Stomach (tissue), 19 donors: ENCODE measurements at regions of chr17 and their contacts with region 1.

Region 1: DNA sequence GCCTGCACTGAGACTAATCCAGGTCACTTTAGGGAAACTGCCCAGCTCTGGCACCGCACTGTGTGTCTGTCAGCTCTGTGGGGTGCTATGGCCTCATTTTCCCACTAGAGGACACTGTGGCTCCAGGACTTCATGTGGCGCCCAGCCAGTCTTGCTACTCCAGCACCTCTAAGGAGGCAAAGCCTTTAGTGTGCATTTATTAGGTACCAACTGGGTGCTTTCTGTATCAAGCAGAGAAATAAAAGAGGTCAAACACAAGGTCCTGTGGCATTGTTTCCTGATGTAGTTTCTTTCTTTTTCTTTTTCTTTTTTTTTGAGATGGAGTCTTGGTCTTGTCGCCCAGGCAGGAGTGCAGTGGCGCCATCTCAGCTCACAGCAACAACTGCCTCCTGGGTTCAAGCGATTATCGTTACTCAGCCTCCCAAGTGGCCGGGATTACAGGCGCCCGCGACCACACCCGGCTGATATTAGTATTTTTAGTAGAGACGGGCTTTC is 12.5 kb upstream of the RHBDL3 start:
- DNase-seq: peak; percentile 87 to 92
- H3K4me3 ChIP-seq: no peak overlapping the region
- H3K27ac ChIP-seq: no peak overlapping the region
- H3K4me1 ChIP-seq: peaks cover 0 to 12% (median 12%) of the 10 kb centered on the region in 4 donors
- H3K27me3 ChIP-seq: no peaks in the 10 kb centered on the region
- CTCF ChIP-seq: peak in 5 of 7 experiments; percentile 86 to 95 (median 94)
- EP300 ChIP-seq: no peak
- POLR2A ChIP-seq: no peak

Region 2: GRCh38 chr17:32319548-32319905 is 66.4 kb after region 1 on chr17:
- intact Hi-C with region 1: loop called (anchors 5 kb)
- DNase-seq: peak; percentile 83 to 84
- H3K4me3 ChIP-seq: peak overlapping the region in 1 of 4 donors; percentile 22
- H3K27ac ChIP-seq: no peak overlapping the region
- H3K4me1 ChIP-seq: peaks cover 0 to 10% (median 10%) of the 10 kb centered on the region in 4 donors
- H3K27me3 ChIP-seq: no peaks in the 10 kb centered on the region
- CTCF ChIP-seq: peak in 6 of 7 experiments; percentile 12 to 95 (median 90)
- EP300 ChIP-seq: no peak
- POLR2A ChIP-seq: no peak